Astrocyte of the spinal cord (primary cell): ENCODE measurements at regions of chr1 and their contacts with region 1.

Region 1: DNA sequence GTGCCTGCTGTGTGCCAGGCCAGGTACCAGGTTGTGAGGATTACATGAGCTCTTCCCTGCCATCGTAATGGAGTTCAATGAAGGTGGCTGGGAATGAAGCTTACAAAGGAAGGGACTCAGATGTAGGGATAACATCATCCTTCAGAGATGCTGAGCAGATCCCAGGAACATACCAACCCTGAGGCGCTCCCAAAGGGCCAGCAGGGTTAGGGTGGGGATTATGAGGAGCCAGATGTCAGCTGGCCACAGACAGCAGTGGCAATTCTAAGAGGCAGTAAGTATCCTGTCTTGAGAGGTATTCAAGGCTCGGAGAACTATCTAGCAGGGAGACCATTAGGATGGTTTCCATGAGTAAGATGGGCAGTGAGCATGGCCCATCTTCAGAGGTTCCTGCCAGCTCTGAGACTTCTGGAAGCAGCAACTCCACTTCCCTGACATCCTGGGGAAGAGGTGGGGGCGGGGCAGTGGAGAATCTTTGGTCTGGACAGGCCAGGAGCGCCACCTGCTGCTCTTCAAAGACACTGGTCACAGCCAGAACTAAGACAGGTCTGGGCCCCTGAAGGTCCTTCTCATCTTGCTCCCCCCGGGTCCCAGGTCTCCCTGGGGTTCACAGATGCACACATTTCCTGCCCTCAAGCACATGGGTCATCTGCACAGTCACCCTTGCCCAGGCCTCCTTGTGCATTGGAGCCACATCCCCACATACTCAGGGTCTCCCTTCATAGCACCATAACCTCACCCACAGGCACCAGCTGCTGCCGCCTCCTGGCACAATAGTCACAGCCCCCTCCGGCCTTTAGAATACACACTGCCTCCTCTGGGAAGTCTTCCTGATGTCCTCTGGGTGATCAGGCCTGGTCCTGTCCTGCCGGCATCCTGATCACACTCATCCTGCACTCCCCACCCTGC is 2.7 kb upstream of the SDC3 start:
- DNase-seq: peak; percentile 83
- H3K4me3 ChIP-seq: no peak overlapping the region
- CTCF ChIP-seq: peak; percentile 90

Region 2: GRCh38 chr1:30801771-30802198 is 109.5 kb before region 1 on chr1:
- in situ Hi-C with region 1: loop called (anchors 5 kb)
- DNase-seq: peak; percentile 60
- H3K4me3 ChIP-seq: no peak overlapping the region
- CTCF ChIP-seq: peak; percentile 97

Region 3: DNA sequence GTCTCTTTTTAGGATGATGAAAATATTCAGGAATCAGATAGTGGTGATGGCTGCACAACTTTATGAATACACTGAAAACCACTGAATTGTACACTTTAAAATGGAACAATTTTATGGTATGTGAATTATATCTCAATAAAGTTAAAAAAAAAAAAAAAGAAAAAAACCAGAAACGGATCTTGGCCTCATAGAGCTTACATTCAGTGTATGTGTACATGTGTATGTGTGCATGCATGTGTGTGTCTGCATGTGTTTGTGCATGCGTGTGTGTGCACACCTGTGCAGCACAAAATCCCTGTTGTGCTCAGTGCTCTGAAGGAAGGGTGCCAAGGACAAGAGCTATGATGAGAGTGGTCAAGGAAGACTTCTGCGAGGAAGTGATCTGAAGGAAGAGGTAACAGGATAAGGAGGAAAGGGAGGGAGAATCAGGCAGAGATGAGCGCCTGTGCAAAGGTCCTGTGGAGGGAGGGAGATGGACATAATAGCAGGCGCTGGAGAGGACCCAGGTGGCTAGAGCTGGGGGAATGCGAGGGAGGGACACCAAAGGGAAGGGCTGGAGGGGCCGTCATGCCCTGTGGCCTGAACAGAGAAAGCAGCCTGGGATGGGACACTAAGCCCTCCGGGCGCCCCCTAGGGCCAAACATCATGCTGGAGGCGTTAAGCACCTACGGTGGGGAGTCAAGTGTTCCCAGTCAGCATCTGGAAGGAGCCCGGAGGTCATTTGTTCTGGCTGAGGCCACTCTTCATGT is 303.2 kb after region 1 on chr1:
- in situ Hi-C with region 1: no loop called
- DNase-seq: no peak
- H3K4me3 ChIP-seq: no peak overlapping the region
- CTCF ChIP-seq: peak; percentile 7